CD4-positive, alpha-beta memory T cell (primary cell): ENCODE measurements at regions of chr20 and their contacts with region 1.

Region 1: GRCh38 chr20:32535953-32536823 is 48.9 kb downstream of the NOL4L start:
- DNase-seq: peak; percentile 85 to 94 (median 88)
- H3K4me3 ChIP-seq: peak overlapping the region; percentile 18 to 57
- H3K4me3 Mint-ChIP-seq: peak overlapping the region; percentile 78 to 94 (median 86)
- H3K27ac ChIP-seq: peak overlapping the region; percentile 77
- H3K27ac Mint-ChIP-seq: peak overlapping the region; percentile 95 to 99 (median 97)
- H3K4me1 ChIP-seq: peaks cover 90% of the 10 kb centered on the region
- H3K4me1 Mint-ChIP-seq: peaks cover 61 to 91% (median 77%) of the 10 kb centered on the region in 4 donors
- H3K27me3 ChIP-seq: no peaks in the 10 kb centered on the region
- H3K27me3 Mint-ChIP-seq: no peaks in the 10 kb centered on the region

Region 2: DNA sequence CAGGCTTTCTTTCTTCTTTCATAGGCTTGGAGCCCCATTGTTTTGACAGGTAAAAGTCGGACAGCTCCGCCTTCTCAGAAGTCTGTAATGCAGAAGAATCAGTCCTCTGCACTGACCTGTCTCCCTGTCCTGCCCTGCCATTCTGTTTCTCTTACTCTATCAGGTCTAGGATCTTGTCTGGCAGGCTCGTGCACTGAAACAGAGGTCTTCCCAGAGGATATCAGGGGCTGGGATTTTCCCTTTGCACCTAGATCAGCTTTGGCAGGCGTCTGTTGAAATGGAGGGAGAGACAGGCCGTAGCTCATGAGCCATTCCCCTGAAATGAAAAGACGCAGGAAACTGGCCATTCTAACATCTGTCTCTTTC is 233.7 kb before region 1 on chr20:
- CTCF ChIA-PET with region 1: no interaction called
- POLR2A ChIA-PET with region 1: no interaction called
- intact Hi-C with region 1: no loop called
- DNase-seq: no peak
- H3K4me3 ChIP-seq: no peak overlapping the region
- H3K4me3 Mint-ChIP-seq: no peak overlapping the region
- H3K27ac ChIP-seq: no peak overlapping the region
- H3K27ac Mint-ChIP-seq: peak overlapping the region in 1 of 7 donors; percentile 18
- H3K4me1 ChIP-seq: no peaks in the 10 kb centered on the region
- H3K4me1 Mint-ChIP-seq: peaks cover 6 to 35% (median 16%) of the 10 kb centered on the region in 4 donors
- H3K27me3 ChIP-seq: no peaks in the 10 kb centered on the region
- H3K27me3 Mint-ChIP-seq: no peaks in the 10 kb centered on the region

Region 3: GRCh38 chr20:32357869-32358631 is 178.1 kb before region 1 on chr20 and contains the start of gene ASXL1:
- CTCF ChIA-PET with region 1: interaction called, 3 read pairs
- POLR2A ChIA-PET with region 1: interaction called, 44 read pairs
- intact Hi-C with region 1: no loop called
- DNase-seq: peak; percentile 92 to 95 (median 94)
- H3K4me3 ChIP-seq: peak within 1 kb of the TSS; percentile 77 to 85
- H3K4me3 Mint-ChIP-seq: peak within 1 kb of the TSS; percentile 91 to 98 (median 97)
- H3K27ac ChIP-seq: peak within 1 kb of the TSS; percentile 92
- H3K27ac Mint-ChIP-seq: peak within 1 kb of the TSS; percentile 98 to 99 (median 99)
- H3K4me1 ChIP-seq: peaks cover 42% of the 10 kb centered on the region
- H3K4me1 Mint-ChIP-seq: peaks cover 27 to 53% (median 39%) of the 10 kb centered on the region in 4 donors
- H3K27me3 ChIP-seq: no peaks in the 10 kb centered on the region
- H3K27me3 Mint-ChIP-seq: no peaks in the 10 kb centered on the region
- total RNA-seq, gene ASXL1: 126 to 127 TPM

Region 4: DNA sequence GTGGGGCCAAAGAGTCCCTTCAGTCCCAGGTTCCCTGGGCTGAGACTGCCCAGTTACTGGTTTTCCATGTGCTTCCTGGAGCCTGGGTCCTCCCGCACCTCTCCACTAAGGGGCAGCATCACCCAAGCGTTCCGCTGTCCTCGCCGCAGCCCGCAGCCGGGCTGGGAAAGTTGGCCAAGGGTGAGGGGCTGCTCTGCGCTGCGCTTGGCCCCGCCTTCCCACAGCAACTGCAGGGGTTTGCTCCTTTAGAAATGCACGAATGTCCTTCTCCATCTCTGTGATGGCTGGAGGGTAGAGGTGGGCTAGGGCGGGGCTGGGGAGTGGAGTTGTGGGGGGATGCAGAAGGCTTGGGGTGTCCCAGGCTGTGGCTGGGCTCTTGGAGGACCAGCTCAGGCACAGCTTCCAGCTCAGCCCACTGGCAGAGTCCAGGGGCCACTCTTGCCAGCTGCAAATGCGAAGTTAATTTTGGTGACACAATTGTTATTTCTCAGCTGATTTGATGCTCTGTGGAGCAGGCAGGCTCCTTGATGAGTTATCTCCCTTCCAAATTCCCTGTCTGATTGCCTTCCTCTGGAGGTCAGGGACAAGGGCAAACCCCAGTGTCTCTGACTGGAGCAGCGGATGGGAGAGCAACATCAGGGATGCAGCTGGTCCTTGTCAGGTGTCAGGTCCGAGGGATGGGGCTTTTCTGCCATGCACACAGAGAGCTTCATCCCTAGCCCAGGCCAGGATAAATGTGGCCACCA is 14.2 kb before region 1 on chr20:
- CTCF ChIA-PET with region 1: interaction called, 430 read pairs
- POLR2A ChIA-PET with region 1: interaction called, 449 read pairs
- intact Hi-C with region 1: loop called (anchors 1 kb)
- DNase-seq: peak; percentile 62 to 72 (median 70)
- H3K4me3 ChIP-seq: no peak overlapping the region
- H3K4me3 Mint-ChIP-seq: peak overlapping the region in 6 of 8 donors; percentile 21 to 76 (median 56)
- H3K27ac ChIP-seq: peak overlapping the region; percentile 38
- H3K27ac Mint-ChIP-seq: peak overlapping the region; percentile 68 to 90 (median 88)
- H3K4me1 ChIP-seq: peaks cover 59% of the 10 kb centered on the region
- H3K4me1 Mint-ChIP-seq: peaks cover 37 to 66% (median 56%) of the 10 kb centered on the region in 4 donors
- H3K27me3 ChIP-seq: no peaks in the 10 kb centered on the region
- H3K27me3 Mint-ChIP-seq: no peaks in the 10 kb centered on the region

Region 5: GRCh38 chr20:32585011-32585518 is 48.9 kb after region 1 on chr20 and contains the start of gene NOL4L:
- CTCF ChIA-PET with region 1: interaction called, 7 read pairs
- POLR2A ChIA-PET with region 1: interaction called, 283 read pairs
- intact Hi-C with region 1: loop called (anchors 1 kb)
- DNase-seq: peak; percentile 27 to 57 (median 37)
- H3K4me3 ChIP-seq: peak within 1 kb of the TSS; percentile 29 to 61
- H3K4me3 Mint-ChIP-seq: peak within 1 kb of the TSS; percentile 88 to 97 (median 91)
- H3K27ac ChIP-seq: peak within 1 kb of the TSS; percentile 49
- H3K27ac Mint-ChIP-seq: peak within 1 kb of the TSS; percentile 86 to 99 (median 92)
- H3K4me1 ChIP-seq: peaks cover 44% of the 10 kb centered on the region
- H3K4me1 Mint-ChIP-seq: peaks cover 14 to 26% (median 23%) of the 10 kb centered on the region in 4 donors
- H3K27me3 ChIP-seq: no peaks in the 10 kb centered on the region
- H3K27me3 Mint-ChIP-seq: no peaks in the 10 kb centered on the region
- total RNA-seq, gene NOL4L: 71.0 to 74.2 TPM